ENCODE measurements at regions of chr12 and their contacts with region 1.

Region 1: GRCh38 chr12:452667-453210 is 7.0 kb upstream of the B4GALNT3 start:
- DNase-seq: peak; percentile 43 to 75 (median 54)
- H3K4me3 ChIP-seq: no peak overlapping the region
- H3K4me3 Mint-ChIP-seq: peak overlapping the region in 1 of 7 donors; percentile 53
- H3K27ac ChIP-seq: no peak overlapping the region
- H3K27ac Mint-ChIP-seq: peak overlapping the region in 1 of 8 donors; percentile 55
- H3K4me1 ChIP-seq: no peaks in the 10 kb centered on the region
- H3K4me1 Mint-ChIP-seq: peaks cover 0 to 4% (median 4%) of the 10 kb centered on the region in 3 donors
- H3K27me3 ChIP-seq: no peaks in the 10 kb centered on the region
- H3K27me3 Mint-ChIP-seq: no peaks in the 10 kb centered on the region

Region 2: DNA sequence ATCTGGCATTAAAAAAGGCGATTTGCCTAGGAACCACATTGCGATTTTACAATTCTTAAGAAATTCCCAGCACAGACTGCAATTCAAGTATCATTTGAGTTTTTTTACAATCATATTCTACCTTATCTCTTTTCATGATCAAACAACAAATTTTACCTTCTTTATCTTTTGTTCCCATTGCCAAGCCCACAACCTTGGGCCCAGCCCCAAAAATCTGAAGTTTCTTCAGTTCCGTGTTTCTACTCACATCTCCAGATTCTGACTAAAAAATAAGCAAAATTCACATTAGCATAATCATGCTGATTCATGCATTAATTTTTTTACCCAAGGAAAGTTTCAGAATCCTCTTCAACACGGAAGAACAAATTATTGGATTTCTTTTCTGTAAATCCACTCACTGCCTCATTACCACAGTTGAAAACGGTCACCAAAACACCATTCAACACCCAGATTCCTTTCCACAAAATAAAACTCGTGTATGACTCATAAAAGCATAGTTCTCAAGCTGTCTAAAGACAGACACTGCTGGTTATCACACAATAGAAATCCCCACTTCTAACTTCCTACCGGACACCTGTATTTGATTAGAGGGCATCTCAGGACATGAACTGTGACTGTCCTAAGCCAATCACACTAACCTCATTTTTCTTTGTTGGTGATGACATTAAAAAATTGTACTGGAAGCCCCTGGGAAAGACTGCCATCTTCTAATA is 96.3 kb before region 1 on chr12:
- CTCF ChIA-PET with region 1: no interaction called
- POLR2A ChIA-PET with region 1: no interaction called
- DNase-seq: no peak
- H3K4me3 ChIP-seq: no peak overlapping the region
- H3K4me3 Mint-ChIP-seq: no peak overlapping the region
- H3K27ac ChIP-seq: no peak overlapping the region
- H3K27ac Mint-ChIP-seq: peak overlapping the region in 1 of 8 donors; percentile 25
- H3K4me1 ChIP-seq: no peaks in the 10 kb centered on the region
- H3K4me1 Mint-ChIP-seq: peaks cover 19 to 36% (median 36%) of the 10 kb centered on the region in 3 donors
- H3K27me3 ChIP-seq: no peaks in the 10 kb centered on the region
- H3K27me3 Mint-ChIP-seq: no peaks in the 10 kb centered on the region

Region 3: GRCh38 chr12:442235-442884 is 10.4 kb before region 1 on chr12:
- CTCF ChIA-PET with region 1: interaction called, 15 read pairs
- POLR2A ChIA-PET with region 1: no interaction called
- DNase-seq: peak; percentile 15 to 53 (median 33)
- H3K4me3 ChIP-seq: no peak overlapping the region
- H3K4me3 Mint-ChIP-seq: no peak overlapping the region
- H3K27ac ChIP-seq: no peak overlapping the region
- H3K27ac Mint-ChIP-seq: peak overlapping the region in 1 of 8 donors; percentile 8
- H3K4me1 ChIP-seq: no peaks in the 10 kb centered on the region
- H3K4me1 Mint-ChIP-seq: peaks cover 0 to 6% (median 0%) of the 10 kb centered on the region in 3 donors
- H3K27me3 ChIP-seq: no peaks in the 10 kb centered on the region
- H3K27me3 Mint-ChIP-seq: peaks cover 0 to 11% of the 10 kb centered on the region in 2 donors

Region 4: GRCh38 chr12:464484-465267 is 11.9 kb after region 1 on chr12:
- CTCF ChIA-PET with region 1: interaction called, 27 read pairs
- POLR2A ChIA-PET with region 1: no interaction called
- DNase-seq: no peak
- H3K4me3 ChIP-seq: no peak overlapping the region
- H3K4me3 Mint-ChIP-seq: peak overlapping the region in 2 of 7 donors; percentile 15 to 23
- H3K27ac ChIP-seq: no peak overlapping the region
- H3K27ac Mint-ChIP-seq: peak overlapping the region in 1 of 8 donors; percentile 88
- H3K4me1 ChIP-seq: no peaks in the 10 kb centered on the region
- H3K4me1 Mint-ChIP-seq: peaks cover 35 to 42% (median 41%) of the 10 kb centered on the region in 3 donors
- H3K27me3 ChIP-seq: no peaks in the 10 kb centered on the region
- H3K27me3 Mint-ChIP-seq: peaks cover 0 to 5% of the 10 kb centered on the region in 2 donors

Region 5: GRCh38 chr12:510071-510825 is 57.5 kb after region 1 on chr12:
- CTCF ChIA-PET with region 1: no interaction called
- POLR2A ChIA-PET with region 1: no interaction called
- DNase-seq: no peak
- H3K4me3 ChIP-seq: no peak overlapping the region
- H3K4me3 Mint-ChIP-seq: no peak overlapping the region
- H3K27ac ChIP-seq: no peak overlapping the region
- H3K27ac Mint-ChIP-seq: no peak overlapping the region
- H3K4me1 ChIP-seq: no peaks in the 10 kb centered on the region
- H3K4me1 Mint-ChIP-seq: peaks cover 0 to 2% (median 0%) of the 10 kb centered on the region in 3 donors
- H3K27me3 ChIP-seq: no peaks in the 10 kb centered on the region
- H3K27me3 Mint-ChIP-seq: peaks cover 8 to 10% of the 10 kb centered on the region in 2 donors

Region 6: DNA sequence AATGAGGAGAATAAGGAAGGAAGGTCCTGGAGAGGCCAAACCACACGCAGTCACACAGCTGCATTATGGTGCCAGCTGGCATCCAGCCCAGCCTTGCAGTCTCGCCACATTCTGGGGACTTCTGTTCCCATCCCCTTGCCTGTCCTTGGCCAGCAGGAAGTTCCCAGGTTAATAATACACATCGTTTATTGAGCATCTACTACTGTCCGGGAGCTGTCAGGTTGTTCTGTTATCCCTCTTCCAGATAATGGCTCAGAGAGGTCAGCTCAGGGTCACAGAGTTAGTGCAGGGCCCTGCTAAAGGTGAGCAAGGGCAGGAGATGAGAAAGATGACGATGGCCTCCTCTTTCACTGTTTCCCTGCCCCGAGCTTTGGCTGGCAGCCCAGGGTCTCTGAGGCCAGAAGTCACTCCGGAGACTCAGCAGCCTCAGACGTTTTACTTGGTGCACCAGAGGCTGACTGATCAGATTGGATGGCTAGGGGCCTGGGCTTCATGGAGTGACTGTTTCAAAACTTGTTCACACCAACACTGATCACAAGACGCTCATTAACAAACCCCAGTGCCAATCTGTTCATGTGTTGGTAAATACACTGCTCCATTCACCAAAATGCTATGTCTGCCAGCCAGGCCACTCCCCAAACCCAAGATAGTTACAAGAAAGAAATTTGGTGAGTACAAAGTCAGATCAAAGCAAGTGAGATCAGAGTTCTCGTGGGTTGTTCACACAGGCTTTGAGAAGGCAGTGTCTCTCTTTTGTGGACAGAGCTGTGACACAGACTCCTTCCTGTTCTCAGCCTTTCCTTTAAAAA is 86.2 kb after region 1 on chr12:
- CTCF ChIA-PET with region 1: interaction called, 52 read pairs
- POLR2A ChIA-PET with region 1: no interaction called
- DNase-seq: peak in 4 of 5 donors; percentile 18 to 88 (median 76)
- H3K4me3 ChIP-seq: no peak overlapping the region
- H3K4me3 Mint-ChIP-seq: peak overlapping the region; percentile 0 to 76 (median 55)
- H3K27ac ChIP-seq: no peak overlapping the region
- H3K27ac Mint-ChIP-seq: peak overlapping the region; percentile 26 to 94 (median 82)
- H3K4me1 ChIP-seq: peaks cover 24% of the 10 kb centered on the region
- H3K4me1 Mint-ChIP-seq: peaks cover 20 to 23% (median 22%) of the 10 kb centered on the region in 3 donors
- H3K27me3 ChIP-seq: no peaks in the 10 kb centered on the region
- H3K27me3 Mint-ChIP-seq: no peaks in the 10 kb centered on the region

Region 7: DNA sequence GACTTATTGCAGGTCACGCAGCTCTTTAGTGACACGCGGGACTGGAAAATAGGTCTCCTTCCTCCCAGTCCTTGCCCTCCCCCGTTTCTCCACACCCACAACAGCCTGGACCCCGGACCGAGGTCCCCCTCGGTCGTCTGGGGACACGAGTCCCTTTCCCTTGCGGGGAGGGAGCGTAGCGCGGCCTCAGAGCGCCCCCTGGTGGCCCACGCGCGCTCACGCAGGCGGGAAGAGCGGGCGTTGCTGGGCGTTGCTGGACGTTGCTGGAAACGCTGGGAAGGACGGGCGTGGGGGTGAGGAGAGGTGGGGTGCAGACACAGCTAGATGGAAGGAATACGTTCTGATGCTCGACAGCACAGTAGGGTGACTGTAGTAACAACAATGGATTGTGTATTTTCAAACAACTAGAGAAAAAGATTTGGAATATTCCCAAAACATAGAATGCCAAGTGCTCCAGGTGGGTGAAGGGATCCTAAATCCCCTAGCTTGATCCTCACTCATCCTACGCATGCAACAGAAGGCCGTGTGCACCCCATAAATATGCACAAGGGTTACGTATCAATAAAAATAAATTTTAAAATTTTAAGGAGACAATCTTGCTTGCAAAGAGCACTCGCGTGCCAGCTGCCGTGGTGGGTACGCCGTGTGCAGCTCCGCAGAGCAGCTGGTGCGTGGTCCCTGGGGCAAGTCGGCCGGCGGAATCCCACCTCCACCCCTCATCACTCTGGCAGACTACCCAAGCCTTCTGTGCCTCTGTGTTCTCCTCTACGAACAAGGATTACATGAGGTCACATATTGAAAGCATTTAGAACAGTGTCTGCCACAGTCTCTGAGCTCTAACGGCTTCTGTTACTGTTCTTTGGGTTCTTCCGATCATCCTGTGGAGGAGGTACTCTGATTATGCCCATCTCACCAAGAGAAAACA is 94.4 kb after region 1 on chr12:
- CTCF ChIA-PET with region 1: interaction called, 52 read pairs
- POLR2A ChIA-PET with region 1: interaction called, 3 read pairs
- DNase-seq: peak; percentile 58 to 78 (median 60)
- H3K4me3 ChIP-seq: no peak overlapping the region
- H3K4me3 Mint-ChIP-seq: no peak overlapping the region
- H3K27ac ChIP-seq: no peak overlapping the region
- H3K27ac Mint-ChIP-seq: peak overlapping the region in 1 of 8 donors; percentile 64
- H3K4me1 ChIP-seq: peaks cover 12% of the 10 kb centered on the region
- H3K4me1 Mint-ChIP-seq: peaks cover 20 to 39% (median 20%) of the 10 kb centered on the region in 3 donors
- H3K27me3 ChIP-seq: peaks cover 7% of the 10 kb centered on the region
- H3K27me3 Mint-ChIP-seq: peaks cover 4 to 18% of the 10 kb centered on the region in 2 donors

Region 8: GRCh38 chr12:552466-552865 is 99.7 kb after region 1 on chr12:
- CTCF ChIA-PET with region 1: interaction called, 45 read pairs
- POLR2A ChIA-PET with region 1: interaction called, 3 read pairs
- DNase-seq: no peak
- H3K4me3 ChIP-seq: no peak overlapping the region
- H3K4me3 Mint-ChIP-seq: peak overlapping the region in 3 of 7 donors; percentile 83 to 91 (median 91)
- H3K27ac ChIP-seq: no peak overlapping the region
- H3K27ac Mint-ChIP-seq: peak overlapping the region in 5 of 8 donors; percentile 10 to 95 (median 66)
- H3K4me1 ChIP-seq: peaks cover 31% of the 10 kb centered on the region
- H3K4me1 Mint-ChIP-seq: peaks cover 34 to 57% (median 44%) of the 10 kb centered on the region in 3 donors
- H3K27me3 ChIP-seq: no peaks in the 10 kb centered on the region
- H3K27me3 Mint-ChIP-seq: peaks cover 1 to 3% of the 10 kb centered on the region in 2 donors